ENCODE measurements at regions of chr19 and their contacts with region 1.

Region 1: DNA sequence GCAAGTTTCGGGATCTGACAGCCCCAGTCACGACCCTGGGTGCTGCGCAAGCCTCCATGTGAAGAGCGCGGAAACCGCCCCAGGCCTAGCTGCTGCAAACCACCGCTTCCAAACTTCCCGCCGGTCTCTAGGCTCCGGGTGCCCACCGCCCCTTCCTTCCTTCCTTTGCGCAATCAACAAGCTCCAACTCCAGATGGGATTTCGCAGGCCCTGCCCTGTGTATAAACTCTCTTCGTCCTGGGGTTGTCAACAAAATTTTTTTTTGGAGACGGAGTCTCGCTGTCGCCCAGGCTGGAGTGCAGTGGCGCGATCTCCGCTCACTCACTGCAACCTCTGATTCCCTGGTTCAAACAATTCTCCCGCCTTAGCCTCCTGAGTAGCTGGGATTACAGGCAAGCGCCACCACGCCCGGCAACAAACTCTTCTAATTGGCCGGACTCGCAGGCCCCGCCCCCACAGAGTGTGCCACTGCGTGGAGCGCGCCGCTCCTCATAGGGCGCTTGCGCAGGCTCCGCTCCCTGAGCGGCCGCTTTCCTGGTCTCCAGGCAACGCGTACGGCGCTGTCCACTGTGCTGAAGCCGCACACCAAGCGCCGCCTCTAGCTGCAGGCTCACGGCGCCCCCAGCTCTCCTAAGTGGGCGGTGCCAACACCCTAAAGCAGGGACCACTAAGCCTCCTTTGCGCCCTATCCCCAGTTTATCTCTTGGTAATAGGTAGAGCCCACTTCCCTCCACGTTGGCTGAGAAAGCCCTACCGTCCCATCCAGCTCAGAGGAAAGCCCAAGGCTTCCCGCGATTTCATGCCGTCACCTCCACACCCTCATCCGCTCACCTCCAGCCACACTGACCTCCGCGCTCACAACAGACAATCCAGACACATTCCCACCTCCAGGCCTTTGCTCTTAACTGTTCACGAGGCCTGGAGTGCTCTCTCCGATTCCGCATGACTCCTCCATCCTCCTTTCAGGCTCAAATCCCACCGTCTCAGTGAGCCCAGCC is 5.5 kb upstream of the QTRT1 start:
- DNase-seq: peak; percentile 92
- H3K4me3 Mint-ChIP-seq: peak overlapping the region; percentile 68
- H3K27ac Mint-ChIP-seq: no peak overlapping the region
- H3K4me1 Mint-ChIP-seq: peaks cover 17% of the 10 kb centered on the region
- H3K27me3 Mint-ChIP-seq: peaks cover 8% of the 10 kb centered on the region

Region 2: GRCh38 chr19:10403137-10404021 is 292.3 kb before region 1 on chr19 and contains the start of gene CDC37:
- CTCF ChIA-PET with region 1: no interaction called
- intact Hi-C with region 1: loop called (anchors 5 kb)
- DNase-seq: peak; percentile 98
- H3K4me3 Mint-ChIP-seq: peak within 1 kb of the TSS; percentile 91
- H3K27ac Mint-ChIP-seq: peak within 1 kb of the TSS; percentile 77
- H3K4me1 Mint-ChIP-seq: peaks cover 65% of the 10 kb centered on the region
- H3K27me3 Mint-ChIP-seq: no peaks in the 10 kb centered on the region
- total RNA-seq, gene CDC37: 158 to 164 TPM

Region 3: DNA sequence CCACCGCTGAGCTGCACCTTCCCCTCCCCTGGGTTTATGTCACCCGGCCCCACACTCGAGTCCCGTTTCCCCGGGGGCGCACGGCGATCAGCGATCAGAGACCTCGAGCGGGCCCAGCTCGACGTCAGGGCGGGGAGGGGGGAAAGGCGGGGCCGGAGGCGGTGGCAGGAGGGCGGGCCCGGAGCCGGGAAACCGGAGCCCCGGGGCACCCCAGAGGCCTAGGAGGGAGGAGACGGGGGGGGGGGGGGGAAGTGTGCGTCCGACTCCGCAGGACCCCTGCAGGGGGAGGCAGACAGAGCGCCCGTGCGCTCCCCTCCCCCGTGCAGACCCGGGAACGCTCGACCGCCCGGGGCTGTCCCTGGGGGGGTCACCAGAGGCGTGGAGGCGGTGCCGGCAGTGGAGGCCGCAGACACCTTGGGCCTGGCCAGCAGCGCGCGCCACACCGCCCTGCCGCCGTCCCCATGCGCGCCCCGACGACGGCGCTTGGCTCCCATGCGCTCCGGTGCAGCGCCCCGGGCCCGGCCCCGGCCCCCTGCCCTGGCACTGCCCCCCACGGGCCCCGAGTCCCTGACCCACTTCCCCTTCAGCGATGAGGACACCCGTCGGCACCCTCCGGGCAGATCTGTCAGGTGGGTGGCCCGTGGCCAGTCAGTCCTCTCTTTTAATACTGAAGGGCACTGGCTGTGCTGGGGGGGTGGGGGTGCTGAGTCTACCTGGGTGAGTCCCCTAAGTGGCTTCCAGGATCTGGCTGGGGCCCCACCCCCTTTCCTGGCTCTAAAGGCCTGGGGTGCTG is 263.6 kb before region 1 on chr19:
- CTCF ChIA-PET with region 1: no interaction called
- intact Hi-C with region 1: no loop called
- DNase-seq: peak; percentile 68
- H3K4me3 Mint-ChIP-seq: peak overlapping the region; percentile 72
- H3K27ac Mint-ChIP-seq: no peak overlapping the region
- H3K4me1 Mint-ChIP-seq: peaks cover 38% of the 10 kb centered on the region
- H3K27me3 Mint-ChIP-seq: peaks cover 42% of the 10 kb centered on the region

Region 4: GRCh38 chr19:10510301-10510802 is 185.3 kb before region 1 on chr19:
- CTCF ChIA-PET with region 1: interaction called, 15 read pairs
- intact Hi-C with region 1: no loop called
- DNase-seq: peak; percentile 74
- H3K4me3 Mint-ChIP-seq: no peak overlapping the region
- H3K27ac Mint-ChIP-seq: no peak overlapping the region
- H3K4me1 Mint-ChIP-seq: peaks cover 16% of the 10 kb centered on the region
- H3K27me3 Mint-ChIP-seq: peaks cover 25% of the 10 kb centered on the region

Region 5: GRCh38 chr19:10580979-10581631 is 114.6 kb before region 1 on chr19:
- CTCF ChIA-PET with region 1: interaction called, 147 read pairs
- intact Hi-C with region 1: loop called (anchors 1 kb)
- DNase-seq: peak; percentile 97
- H3K4me3 Mint-ChIP-seq: no peak overlapping the region
- H3K27ac Mint-ChIP-seq: no peak overlapping the region
- H3K4me1 Mint-ChIP-seq: peaks cover 6% of the 10 kb centered on the region
- H3K27me3 Mint-ChIP-seq: no peaks in the 10 kb centered on the region

Region 6: GRCh38 chr19:10864538-10864899 is 168.8 kb after region 1 on chr19:
- CTCF ChIA-PET with region 1: interaction called, 20 read pairs
- intact Hi-C with region 1: no loop called
- DNase-seq: peak; percentile 94
- H3K4me3 Mint-ChIP-seq: no peak overlapping the region
- H3K27ac Mint-ChIP-seq: no peak overlapping the region
- H3K4me1 Mint-ChIP-seq: peaks cover 15% of the 10 kb centered on the region
- H3K27me3 Mint-ChIP-seq: no peaks in the 10 kb centered on the region

Measured in activated naive CD4-positive, alpha-beta T cell treated with anti-CD3 and anti-CD28 coated beads for 36 hours (primary cell).